Breast epithelium (tissue), 4 donors: ENCODE measurements at regions of chr2 and their contacts with region 1.

Region 1: DNA sequence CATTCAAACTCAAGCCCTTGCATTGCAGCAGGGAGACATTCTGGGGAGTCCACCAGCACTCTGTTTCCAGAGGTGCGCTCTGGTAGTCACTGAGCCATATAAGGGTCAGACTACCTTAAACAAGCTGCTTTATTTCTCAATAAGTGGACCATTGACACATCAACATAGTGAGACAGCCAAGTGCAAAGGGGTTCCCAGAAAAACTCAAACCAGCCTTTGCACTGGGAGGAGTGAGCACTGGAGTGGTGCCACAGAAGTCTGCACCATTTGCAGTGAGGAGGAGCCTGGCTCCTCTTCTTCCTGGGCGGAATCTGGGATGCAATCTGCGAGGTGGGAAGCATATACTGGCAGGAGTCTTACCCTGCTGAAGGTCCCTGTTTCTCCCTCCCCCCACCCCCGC is 86.4 kb downstream of the OSR1 start:
- DNase-seq: no peak
- H3K4me3 ChIP-seq: no peak overlapping the region
- H3K27ac ChIP-seq: no peak overlapping the region
- H3K4me1 ChIP-seq: no peaks in the 10 kb centered on the region
- H3K27me3 ChIP-seq: no peaks in the 10 kb centered on the region
- CTCF ChIP-seq: no peak
- POLR2A ChIP-seq: no peak

Region 2: DNA sequence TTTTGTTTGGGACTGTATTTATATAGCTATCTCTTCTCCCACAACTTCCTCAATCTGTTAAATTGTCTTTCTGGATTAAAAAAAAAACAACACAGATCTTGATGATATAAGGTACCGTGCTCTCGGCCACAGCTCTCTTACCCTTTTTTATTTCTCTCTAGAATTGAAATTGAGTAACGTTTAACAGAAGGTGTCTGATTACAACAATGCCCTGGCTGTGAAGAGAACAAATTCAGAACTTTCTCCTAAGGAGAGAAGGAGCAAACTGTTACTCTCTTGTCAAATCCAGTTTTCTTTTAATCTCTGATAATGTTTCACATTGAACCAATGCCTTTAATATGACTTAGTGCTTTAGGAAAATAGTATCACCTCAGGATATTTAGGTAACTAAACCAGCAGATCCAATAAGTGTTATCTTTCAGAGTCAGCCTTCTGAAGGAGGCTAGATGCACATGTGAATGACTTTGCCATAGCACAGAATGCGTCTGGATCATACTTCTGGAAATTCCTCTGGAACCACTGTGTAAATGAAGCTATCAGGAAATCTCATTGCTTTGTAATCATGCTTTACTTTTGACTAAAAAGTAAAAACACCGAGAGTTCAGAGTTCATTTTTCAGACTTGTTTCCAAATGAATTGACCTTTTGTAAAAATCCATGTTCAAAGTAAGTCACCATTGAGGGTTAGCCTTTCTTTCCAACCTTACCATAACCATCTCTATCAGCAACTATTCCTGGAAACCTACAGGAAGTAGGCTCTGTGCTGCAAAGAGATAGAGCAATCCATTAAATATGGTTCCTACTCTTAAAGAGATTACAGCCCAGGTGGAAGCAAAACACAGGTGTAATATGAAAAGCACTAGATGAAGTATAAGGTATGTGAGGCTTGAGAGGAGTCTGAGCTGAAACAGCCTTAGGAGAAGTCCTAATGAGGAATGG is 233.4 kb after region 1 on chr2:
- intact Hi-C with region 1: loop called (anchors 5 kb)
- DNase-seq: no peak
- H3K4me3 ChIP-seq: no peak overlapping the region
- H3K27ac ChIP-seq: no peak overlapping the region
- H3K4me1 ChIP-seq: no peaks in the 10 kb centered on the region
- H3K27me3 ChIP-seq: no peaks in the 10 kb centered on the region
- CTCF ChIP-seq: no peak
- POLR2A ChIP-seq: no peak